Mammary epithelial cell (primary cell): ENCODE measurements at regions of chr10 and their contacts with region 1.

Region 1: GRCh38 chr10:77763453-77764430 is 126.1 kb upstream of the KCNMA1 start:
- DNase-seq: no peak
- H3K4me3 ChIP-seq: no peak overlapping the region
- H3K27ac ChIP-seq: no peak overlapping the region
- H3K4me1 ChIP-seq: no peaks in the 10 kb centered on the region
- H3K27me3 ChIP-seq: no peaks in the 10 kb centered on the region
- CTCF ChIP-seq: no peak

Region 2: DNA sequence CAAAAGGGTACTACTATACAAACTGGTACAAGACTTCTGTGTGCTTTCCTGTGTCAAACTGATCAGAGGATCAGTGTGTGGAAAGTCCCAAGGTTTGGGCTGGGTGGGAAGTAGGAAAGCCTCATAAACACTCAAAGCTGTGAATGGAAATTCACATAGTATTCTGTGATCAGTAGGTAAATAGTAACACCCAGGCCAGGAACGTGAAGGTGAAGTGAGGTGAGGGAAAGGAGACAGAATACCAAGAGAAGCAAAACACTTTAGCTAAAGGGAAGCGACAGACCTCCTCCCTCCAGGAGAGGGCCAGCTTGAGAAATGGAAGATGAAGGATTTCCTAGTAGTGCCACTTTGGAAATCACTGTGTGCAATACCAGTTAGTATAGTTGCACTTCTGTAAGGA is 578.0 kb before region 1 on chr10:
- CTCF ChIA-PET with region 1: no interaction called
- dilution Hi-C with region 1: loop called (anchors 5 kb)
- in situ Hi-C with region 1: no loop called
- intact Hi-C with region 1: no loop called
- DNase-seq: no peak
- H3K4me3 ChIP-seq: no peak overlapping the region
- H3K27ac ChIP-seq: no peak overlapping the region
- H3K4me1 ChIP-seq: peaks cover 18% of the 10 kb centered on the region
- H3K27me3 ChIP-seq: no peaks in the 10 kb centered on the region
- CTCF ChIP-seq: no peak

Region 3: GRCh38 chr10:77661100-77661499 is 102.6 kb before region 1 on chr10:
- CTCF ChIA-PET with region 1: interaction called, 4 read pairs
- dilution Hi-C with region 1: loop called (anchors 5 kb)
- in situ Hi-C with region 1: no loop called
- intact Hi-C with region 1: no loop called
- DNase-seq: no peak
- H3K4me3 ChIP-seq: no peak overlapping the region
- H3K27ac ChIP-seq: no peak overlapping the region
- H3K4me1 ChIP-seq: peaks cover 13% of the 10 kb centered on the region
- H3K27me3 ChIP-seq: no peaks in the 10 kb centered on the region
- CTCF ChIP-seq: no peak

Region 4: DNA sequence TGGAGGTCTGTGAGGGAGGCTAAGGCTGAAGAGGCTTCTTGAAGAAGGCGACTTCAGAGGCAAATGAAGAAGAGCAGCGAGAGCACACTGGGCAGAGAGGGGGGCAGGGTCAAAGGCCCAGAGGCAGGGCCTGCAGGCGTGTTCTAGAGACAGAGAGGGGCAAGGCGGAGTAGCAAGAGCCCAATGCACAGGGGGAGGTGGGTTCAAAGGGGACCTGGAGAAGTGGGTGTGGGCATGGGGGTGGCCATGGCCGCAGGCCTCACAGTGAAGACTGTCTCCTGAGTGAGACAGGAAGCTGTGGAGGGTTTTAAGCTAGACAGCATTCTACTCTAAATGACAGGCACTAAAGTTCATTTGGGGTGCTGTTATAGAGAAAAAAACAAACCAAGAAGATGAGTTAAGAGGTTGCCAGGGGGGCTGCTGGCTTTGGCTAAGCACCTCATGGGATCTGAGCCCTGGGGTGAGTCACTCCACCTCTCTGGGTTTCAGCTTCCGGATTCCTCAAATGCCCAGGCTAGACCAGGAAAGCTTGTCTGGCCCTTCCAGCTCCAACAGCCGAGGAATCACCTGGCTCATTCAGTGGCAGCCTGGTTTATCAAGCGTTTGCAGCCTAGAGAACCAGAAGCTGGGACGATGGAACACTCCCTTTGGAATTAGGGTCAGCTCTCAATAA is 81.2 kb after region 1 on chr10:
- CTCF ChIA-PET with region 1: no interaction called
- dilution Hi-C with region 1: no loop called
- in situ Hi-C with region 1: no loop called
- intact Hi-C with region 1: no loop called
- DNase-seq: peak; percentile 85
- H3K4me3 ChIP-seq: no peak overlapping the region
- H3K27ac ChIP-seq: peak overlapping the region; percentile 46
- H3K4me1 ChIP-seq: peaks cover 28% of the 10 kb centered on the region
- H3K27me3 ChIP-seq: no peaks in the 10 kb centered on the region
- CTCF ChIP-seq: no peak